RWPE1 (cell line): ENCODE measurements at regions of chr17 and their contacts with region 1.

Region 1: GRCh38 chr17:42843358-42843934 is 934 bp upstream of the AOC2 start:
- DNase-seq: peak; percentile 78
- H3K27ac ChIP-seq: no peak overlapping the region
- CTCF ChIP-seq: peak; percentile 95

Region 2: GRCh38 chr17:42937712-42938596 is 94.5 kb after region 1 on chr17:
- CTCF ChIA-PET with region 1: interaction called, 12 read pairs
- POLR2A ChIA-PET with region 1: no interaction called
- DNase-seq: peak; percentile 57
- H3K27ac ChIP-seq: no peak overlapping the region
- CTCF ChIP-seq: peak; percentile 69

Region 3: GRCh38 chr17:43661699-43662412 is 818.4 kb after region 1 on chr17 and contains the start of gene MEOX1:
- CTCF ChIA-PET with region 1: no interaction called
- POLR2A ChIA-PET with region 1: no interaction called
- DNase-seq: peak; percentile 71
- H3K27ac ChIP-seq: peak within 1 kb of the TSS; percentile 34; the same call in 1 of the 2 replicates
- CTCF ChIP-seq: no peak